PC-3 (cell line): ENCODE measurements at regions of chr3 and their contacts with region 1.

Region 1: GRCh38 chr3:29764603-29765254 is 483.9 kb downstream of the RBMS3 start:
- DNase-seq: peak; percentile 94
- ATAC-seq: peak; percentile 70
- H3K4me3 ChIP-seq: no peak overlapping the region
- H3K27ac ChIP-seq: no peak overlapping the region
- H3K4me1 ChIP-seq: peaks cover 9% of the 10 kb centered on the region; the same call in 1 of the 2 replicates
- H3K27me3 ChIP-seq: no peaks in the 10 kb centered on the region
- CTCF ChIP-seq: peak; percentile 93

Region 2: GRCh38 chr3:27861046-27862036 is 1903.4 kb before region 1 on chr3:
- CTCF ChIA-PET with region 1: no interaction called
- POLR2A ChIA-PET with region 1: no interaction called
- intact Hi-C with region 1: no loop called
- DNase-seq: no peak
- ATAC-seq: no peak
- H3K4me3 ChIP-seq: no peak overlapping the region
- H3K27ac ChIP-seq: no peak overlapping the region
- H3K4me1 ChIP-seq: no peaks in the 10 kb centered on the region
- H3K27me3 ChIP-seq: no peaks in the 10 kb centered on the region
- CTCF ChIP-seq: no peak

Region 3: DNA sequence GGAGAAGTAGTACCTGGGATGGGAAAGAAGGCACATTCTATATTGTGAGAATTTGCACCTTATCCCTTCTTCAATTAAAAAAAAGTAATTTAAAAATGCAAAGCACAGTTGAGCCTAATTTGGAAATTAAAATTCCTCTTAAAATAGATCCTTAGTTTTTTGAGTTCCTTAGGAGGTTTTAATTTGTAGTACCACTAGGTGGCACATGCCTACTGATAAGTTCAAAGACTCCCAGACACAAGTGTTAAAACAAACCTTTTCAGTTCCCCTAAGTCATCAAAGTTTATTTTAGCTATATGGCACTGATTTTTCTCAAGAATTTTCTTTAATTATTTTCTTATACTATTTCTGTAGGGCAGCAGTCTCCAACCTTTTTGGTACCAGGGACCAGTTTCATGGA is 1288.5 kb before region 1 on chr3:
- CTCF ChIA-PET with region 1: no interaction called
- POLR2A ChIA-PET with region 1: no interaction called
- intact Hi-C with region 1: loop called (anchors 1 kb)
- DNase-seq: peak; percentile 64
- ATAC-seq: peak; percentile 59
- H3K4me3 ChIP-seq: no peak overlapping the region
- H3K27ac ChIP-seq: no peak overlapping the region
- H3K4me1 ChIP-seq: no peaks in the 10 kb centered on the region
- H3K27me3 ChIP-seq: no peaks in the 10 kb centered on the region
- CTCF ChIP-seq: peak; percentile 75

Region 4: DNA sequence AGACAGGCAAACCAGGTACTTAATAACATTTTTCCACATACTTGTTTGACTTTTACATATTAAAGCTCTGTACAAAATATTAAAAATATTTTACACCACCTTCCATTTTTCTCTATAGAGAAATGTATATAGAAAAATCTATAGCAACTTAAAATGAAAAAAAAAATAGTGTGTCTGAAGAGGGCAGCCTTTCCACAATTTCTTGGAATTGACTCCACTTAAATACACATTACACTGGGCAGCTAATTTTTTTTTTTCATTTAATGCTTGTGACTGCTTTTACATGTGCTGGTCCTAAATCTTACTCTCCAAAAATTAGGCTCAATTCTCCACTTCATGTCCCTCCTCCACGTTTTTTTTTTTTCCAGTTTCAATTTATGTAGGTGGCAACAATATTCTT is 910.9 kb before region 1 on chr3:
- CTCF ChIA-PET with region 1: no interaction called
- POLR2A ChIA-PET with region 1: no interaction called
- intact Hi-C with region 1: loop called (anchors 1 kb)
- DNase-seq: peak; percentile 46
- ATAC-seq: peak; percentile 67
- H3K4me3 ChIP-seq: no peak overlapping the region
- H3K27ac ChIP-seq: no peak overlapping the region
- H3K4me1 ChIP-seq: peaks cover 5% of the 10 kb centered on the region; the same call in 1 of the 2 replicates
- H3K27me3 ChIP-seq: no peaks in the 10 kb centered on the region
- CTCF ChIP-seq: peak; percentile 58

Region 5: GRCh38 chr3:29153811-29154210 is 610.9 kb before region 1 on chr3:
- CTCF ChIA-PET with region 1: no interaction called
- POLR2A ChIA-PET with region 1: no interaction called
- intact Hi-C with region 1: loop called (anchors 2 kb)
- DNase-seq: no peak
- ATAC-seq: no peak
- H3K4me3 ChIP-seq: no peak overlapping the region
- H3K27ac ChIP-seq: no peak overlapping the region
- H3K4me1 ChIP-seq: no peaks in the 10 kb centered on the region
- H3K27me3 ChIP-seq: no peaks in the 10 kb centered on the region
- CTCF ChIP-seq: no peak

Region 6: GRCh38 chr3:29440413-29441305 is 324.1 kb before region 1 on chr3:
- CTCF ChIA-PET with region 1: no interaction called
- POLR2A ChIA-PET with region 1: no interaction called
- intact Hi-C with region 1: loop called (anchors 2 kb)
- DNase-seq: peak; percentile 31
- ATAC-seq: peak; percentile 77
- H3K4me3 ChIP-seq: peak overlapping the region; percentile 49
- H3K27ac ChIP-seq: no peak overlapping the region
- H3K4me1 ChIP-seq: peaks cover 30% of the 10 kb centered on the region
- H3K27me3 ChIP-seq: no peaks in the 10 kb centered on the region
- CTCF ChIP-seq: no peak

Region 7: GRCh38 chr3:29513231-29513630 is 251.5 kb before region 1 on chr3:
- CTCF ChIA-PET with region 1: no interaction called
- POLR2A ChIA-PET with region 1: no interaction called
- intact Hi-C with region 1: no loop called
- DNase-seq: peak; percentile 27
- ATAC-seq: 0 out of 2 replicates have a peak, but pooled peaks have one; percentile 17
- H3K4me3 ChIP-seq: no peak overlapping the region
- H3K27ac ChIP-seq: no peak overlapping the region
- H3K4me1 ChIP-seq: peaks cover 20% of the 10 kb centered on the region
- H3K27me3 ChIP-seq: no peaks in the 10 kb centered on the region
- CTCF ChIP-seq: no peak

Region 8: DNA sequence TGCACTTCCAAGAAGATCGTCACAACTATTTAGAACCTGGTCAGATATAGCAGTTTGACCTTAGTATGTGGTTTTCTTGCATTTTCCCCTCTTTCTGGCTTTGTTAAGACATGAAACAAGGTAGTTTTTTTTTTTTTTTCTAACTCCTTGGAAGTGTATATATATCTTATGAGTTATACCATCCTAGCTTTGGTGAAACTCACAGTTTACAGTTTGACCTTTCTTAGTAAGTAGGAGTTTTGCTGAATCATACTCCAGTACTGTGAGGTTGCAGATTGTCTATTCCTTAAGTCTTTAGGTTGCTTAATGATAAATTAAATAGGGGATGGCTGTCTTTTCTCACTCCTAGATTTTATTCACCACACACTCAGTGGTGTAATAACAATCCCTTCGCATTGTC is 158.9 kb before region 1 on chr3:
- CTCF ChIA-PET with region 1: no interaction called
- POLR2A ChIA-PET with region 1: no interaction called
- intact Hi-C with region 1: loop called (anchors 5 kb)
- DNase-seq: peak; percentile 18
- ATAC-seq: no peak
- H3K4me3 ChIP-seq: no peak overlapping the region
- H3K27ac ChIP-seq: no peak overlapping the region
- H3K4me1 ChIP-seq: peaks cover 23% of the 10 kb centered on the region
- H3K27me3 ChIP-seq: no peaks in the 10 kb centered on the region
- CTCF ChIP-seq: no peak

Region 9: DNA sequence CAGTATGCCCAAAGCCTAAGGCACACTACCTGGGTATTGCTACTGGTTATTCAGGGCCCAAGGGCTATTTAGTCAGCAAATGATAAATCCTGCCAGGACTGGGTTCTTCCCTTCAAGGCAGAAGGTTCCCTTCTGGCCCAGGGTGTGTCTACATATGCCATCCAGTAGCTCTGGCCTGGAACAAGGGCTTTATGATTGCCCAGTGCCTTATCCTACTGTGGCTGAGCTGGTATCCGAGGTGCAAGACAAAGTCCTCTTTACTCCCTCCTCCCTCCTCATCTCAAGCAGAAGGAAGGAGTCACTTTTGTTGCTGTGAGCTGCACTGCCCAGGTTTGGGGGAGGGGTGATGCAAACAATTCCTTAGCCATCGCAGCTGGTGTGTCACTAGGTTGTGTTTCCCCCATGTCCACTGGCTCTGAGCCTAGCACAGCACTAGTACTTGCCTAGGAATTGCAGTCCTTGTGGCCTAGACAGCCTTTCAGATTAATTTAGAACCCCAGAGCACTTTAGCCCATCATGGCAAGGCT is 619.9 kb after region 1 on chr3:
- CTCF ChIA-PET with region 1: no interaction called
- POLR2A ChIA-PET with region 1: no interaction called
- intact Hi-C with region 1: no loop called
- DNase-seq: no peak
- ATAC-seq: no peak
- H3K4me3 ChIP-seq: no peak overlapping the region
- H3K27ac ChIP-seq: no peak overlapping the region
- H3K4me1 ChIP-seq: no peaks in the 10 kb centered on the region
- H3K27me3 ChIP-seq: no peaks in the 10 kb centered on the region
- CTCF ChIP-seq: no peak